GM18951 (cell line): ENCODE measurements at regions of chr3 and their contacts with region 1.

Region 1: DNA sequence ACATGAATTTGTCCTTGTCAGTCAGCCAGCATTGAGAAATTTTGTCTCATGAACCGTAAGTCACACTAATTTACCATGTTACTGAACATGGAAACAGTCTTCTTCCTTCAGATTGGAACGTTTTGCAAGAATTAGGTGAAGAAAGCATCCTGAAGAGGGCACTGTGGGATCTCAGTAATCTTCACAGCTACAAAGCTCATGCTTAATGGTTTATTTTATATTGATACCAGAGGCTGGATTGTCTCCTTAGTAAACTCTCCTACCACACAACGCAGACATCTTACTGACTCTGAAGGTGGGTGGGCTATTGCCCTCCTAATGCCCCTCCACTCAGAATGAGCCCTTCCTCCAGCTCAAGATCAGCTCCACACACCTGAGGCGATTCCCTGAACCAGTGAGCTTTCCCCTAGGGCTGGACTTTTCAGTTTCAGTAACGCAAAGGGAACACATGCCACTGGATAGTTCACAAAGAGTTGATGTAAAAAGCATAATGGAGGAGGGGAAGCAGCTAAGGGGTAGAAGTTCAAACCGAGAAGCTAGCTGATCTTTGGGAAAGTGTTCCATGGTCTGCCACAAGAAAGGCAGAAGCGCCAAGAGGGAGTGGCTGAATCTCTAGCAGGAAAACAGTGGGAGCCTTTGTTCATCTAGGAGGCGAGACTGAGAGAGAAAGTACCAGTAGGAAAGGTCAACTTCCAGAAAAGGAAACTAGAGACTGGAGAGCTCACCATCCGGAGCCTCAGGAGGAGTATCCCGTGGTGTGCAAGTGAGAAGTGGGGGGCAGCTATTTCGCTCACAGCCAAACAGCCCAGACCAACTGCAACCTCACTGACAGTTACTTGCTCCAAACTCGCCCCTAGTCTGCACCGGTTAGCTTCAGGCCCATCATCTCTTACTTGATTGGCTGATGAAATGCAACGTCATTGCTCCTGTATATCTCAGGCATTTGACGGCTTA is at the start of gene SLC9C1:
- POLR2A ChIP-seq: no peak

Region 2: DNA sequence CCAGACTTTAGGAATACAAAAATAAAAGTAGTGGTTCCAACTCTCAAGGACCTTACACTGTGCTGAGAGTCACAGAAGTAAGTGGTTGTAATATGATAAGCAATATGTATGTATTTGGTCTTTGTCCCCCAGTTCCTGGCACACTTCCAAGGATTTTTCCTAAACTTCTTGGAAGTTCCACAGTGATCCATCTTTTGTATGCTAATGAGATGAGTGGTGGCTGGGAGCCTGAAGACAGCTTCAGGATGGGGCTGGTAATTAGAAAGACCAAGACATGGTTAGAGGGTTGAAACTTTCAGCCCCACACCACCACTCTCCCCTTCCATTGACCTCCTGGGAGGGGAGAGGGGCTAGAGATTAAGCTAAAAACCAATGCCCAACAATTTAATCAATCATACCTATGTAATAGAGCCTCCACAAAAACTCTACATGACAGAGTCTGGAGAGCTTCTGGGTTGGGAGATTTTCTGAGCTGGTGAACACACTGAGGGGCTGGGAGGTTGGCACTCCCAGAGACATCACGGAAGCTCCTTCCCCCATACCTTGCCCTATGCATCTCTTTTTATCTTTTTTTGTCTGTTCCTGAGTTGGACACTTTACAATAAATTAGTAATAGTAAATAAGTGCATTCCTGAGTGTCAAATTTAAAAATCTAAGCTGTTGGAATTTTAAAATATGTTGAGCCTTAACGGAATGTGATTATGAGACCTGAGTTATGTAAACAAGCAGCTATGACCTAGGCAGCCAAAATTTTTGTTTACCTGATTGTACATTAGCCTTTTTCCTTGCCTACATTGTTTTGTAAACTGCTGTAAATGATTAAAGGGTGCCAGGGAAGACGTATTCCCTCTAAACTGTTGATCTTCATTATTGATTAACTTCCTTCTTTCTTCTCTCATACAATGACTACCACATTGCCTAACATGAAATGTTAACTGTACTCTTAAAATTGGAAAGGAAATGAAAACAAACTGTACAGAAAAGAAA is 528.7 kb after region 1 on chr3:
- in situ Hi-C with region 1: no loop called
- POLR2A ChIP-seq: no peak

Region 3: GRCh38 chr3:112990672-112991602 is 697.3 kb after region 1 on chr3 and contains the start of gene GTPBP8:
- in situ Hi-C with region 1: loop called (anchors 25 kb)
- POLR2A ChIP-seq: peak; percentile 88